Activated CD4-positive, alpha-beta T cell treated with anti-CD3 and anti-CD28 coated beads, Interleukin-2, amount 10 ng/mL, durations not matched to agents 24 days and 14 days (primary cell): ENCODE measurements at regions of chr20 and their contacts with region 1.

Region 1: DNA sequence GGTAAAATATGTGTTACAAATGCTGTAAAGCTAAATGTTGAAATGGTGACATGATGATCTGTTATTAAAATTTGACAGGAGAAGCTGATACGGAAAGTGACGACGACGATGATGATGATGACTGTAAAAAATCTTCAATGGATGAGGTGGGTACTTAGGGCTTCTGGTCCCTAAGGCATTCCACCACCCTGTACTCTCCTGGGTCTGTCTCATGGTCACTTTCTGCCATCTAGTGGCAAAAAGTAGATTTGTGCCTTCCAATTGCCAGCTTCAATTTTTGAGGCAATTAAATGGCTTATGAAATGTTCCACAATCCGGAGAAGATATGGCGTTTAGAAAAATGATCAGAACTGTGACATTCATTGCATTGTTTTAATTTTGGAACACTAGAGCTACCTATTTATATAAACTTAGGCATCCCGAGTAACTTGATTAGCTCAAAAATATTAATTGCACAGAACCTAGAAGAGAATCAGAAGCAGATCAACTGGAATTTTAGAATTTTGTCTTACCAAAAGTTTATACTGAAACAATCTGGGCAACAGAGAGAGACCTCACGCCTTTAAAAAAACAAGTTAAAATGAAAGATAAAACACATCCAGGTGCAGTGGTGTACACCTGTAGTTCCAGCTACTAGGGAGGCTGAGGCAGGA is 346.5 kb upstream of the PLCB4 start:
- DNase-seq: peak; percentile 76
- H3K4me3 Mint-ChIP-seq: no peak overlapping the region
- H3K27ac Mint-ChIP-seq: no peak overlapping the region
- H3K4me1 Mint-ChIP-seq: no peaks in the 10 kb centered on the region
- H3K27me3 Mint-ChIP-seq: no peaks in the 10 kb centered on the region

Region 2: GRCh38 chr20:7935027-7935551 is 787.3 kb before region 1 on chr20:
- intact Hi-C with region 1: loop called (anchors 2 kb)
- DNase-seq: no peak
- H3K4me3 Mint-ChIP-seq: no peak overlapping the region
- H3K27ac Mint-ChIP-seq: no peak overlapping the region
- H3K4me1 Mint-ChIP-seq: no peaks in the 10 kb centered on the region
- H3K27me3 Mint-ChIP-seq: peaks cover 5% of the 10 kb centered on the region

Region 3: GRCh38 chr20:8043687-8044282 is 678.6 kb before region 1 on chr20:
- intact Hi-C with region 1: loop called (anchors 2 kb)
- DNase-seq: peak; percentile 80
- H3K4me3 Mint-ChIP-seq: no peak overlapping the region
- H3K27ac Mint-ChIP-seq: no peak overlapping the region
- H3K4me1 Mint-ChIP-seq: peaks cover 2% of the 10 kb centered on the region
- H3K27me3 Mint-ChIP-seq: peaks cover 24% of the 10 kb centered on the region

Region 4: DNA sequence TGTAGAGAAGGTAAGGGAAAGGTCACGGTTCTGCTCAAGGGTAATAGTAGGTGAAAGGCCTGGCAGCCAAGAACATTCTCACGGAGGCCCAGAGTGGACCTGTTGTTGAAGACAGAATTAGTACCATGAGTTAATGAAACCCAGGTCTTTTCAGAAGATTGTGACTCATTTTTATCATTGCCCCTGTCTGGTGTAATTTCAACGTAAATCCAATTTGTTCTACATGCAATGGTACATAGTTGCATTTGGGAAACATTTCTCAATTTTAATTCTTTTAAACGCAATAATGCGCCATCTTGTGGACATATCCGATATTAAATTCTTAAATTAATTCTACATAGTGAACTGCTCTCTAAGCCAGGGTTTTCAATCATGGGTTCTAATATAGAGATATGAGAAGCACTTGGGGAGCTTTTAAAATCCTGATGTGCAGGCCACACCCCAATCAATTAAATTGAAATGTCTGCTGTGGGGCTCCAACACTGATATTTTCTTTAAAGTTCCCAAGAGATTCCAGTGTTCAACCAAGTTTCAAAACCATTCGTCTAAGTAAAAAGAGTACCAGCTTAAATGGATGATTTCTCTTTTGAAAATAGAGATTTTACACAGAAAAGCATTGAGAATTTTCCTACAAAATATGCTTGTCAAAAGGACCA is 332.9 kb before region 1 on chr20:
- intact Hi-C with region 1: loop called (anchors 5 kb)
- DNase-seq: no peak
- H3K4me3 Mint-ChIP-seq: no peak overlapping the region
- H3K27ac Mint-ChIP-seq: no peak overlapping the region
- H3K4me1 Mint-ChIP-seq: peaks cover 4% of the 10 kb centered on the region
- H3K27me3 Mint-ChIP-seq: no peaks in the 10 kb centered on the region

Region 5: GRCh38 chr20:8664778-8665177 is 57.6 kb before region 1 on chr20:
- intact Hi-C with region 1: loop called (anchors 5 kb)
- DNase-seq: no peak
- H3K4me3 Mint-ChIP-seq: no peak overlapping the region
- H3K27ac Mint-ChIP-seq: no peak overlapping the region
- H3K4me1 Mint-ChIP-seq: no peaks in the 10 kb centered on the region
- H3K27me3 Mint-ChIP-seq: no peaks in the 10 kb centered on the region